Psoas muscle (tissue), 8 donors: ENCODE measurements at regions of chr1 and their contacts with region 1.

Region 1: DNA sequence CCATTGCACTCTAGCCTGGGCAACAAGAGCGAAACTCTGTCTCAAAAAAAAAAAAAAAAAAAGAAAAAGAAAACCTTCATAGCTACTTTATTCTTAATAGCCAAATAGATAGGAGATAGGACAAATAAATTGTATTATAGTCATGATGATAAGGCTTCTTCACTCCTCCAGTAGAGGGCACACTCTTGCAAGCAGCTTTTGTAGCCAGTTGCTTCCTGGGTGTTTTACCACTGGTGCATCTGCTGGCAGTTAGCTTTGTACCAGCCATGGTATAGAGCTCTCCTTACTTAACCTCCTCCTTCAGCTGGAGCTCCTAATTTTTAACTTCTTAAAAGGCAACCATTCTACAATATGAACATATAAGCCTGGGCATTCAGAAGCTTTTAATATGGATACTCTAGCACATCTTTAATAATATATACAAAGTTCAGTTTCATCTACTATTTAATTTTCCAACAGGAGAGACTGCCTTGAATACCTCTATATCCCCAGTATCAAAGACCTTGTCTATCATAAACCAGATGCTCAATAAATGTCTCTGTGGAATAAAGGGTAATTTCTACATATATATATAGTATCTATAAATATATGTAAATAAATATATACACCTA is 35.8 kb downstream of the EVI5 start:
- DNase-seq: no peak
- ATAC-seq: peak in 3 of 4 donors; percentile 52 to 83 (median 79)
- H3K4me3 ChIP-seq: no peak overlapping the region
- H3K27ac ChIP-seq: no peak overlapping the region
- H3K4me1 ChIP-seq: peaks cover 10% of the 10 kb centered on the region
- H3K27me3 ChIP-seq: no peaks in the 10 kb centered on the region
- CTCF ChIP-seq: peak; percentile 50

Region 2: DNA sequence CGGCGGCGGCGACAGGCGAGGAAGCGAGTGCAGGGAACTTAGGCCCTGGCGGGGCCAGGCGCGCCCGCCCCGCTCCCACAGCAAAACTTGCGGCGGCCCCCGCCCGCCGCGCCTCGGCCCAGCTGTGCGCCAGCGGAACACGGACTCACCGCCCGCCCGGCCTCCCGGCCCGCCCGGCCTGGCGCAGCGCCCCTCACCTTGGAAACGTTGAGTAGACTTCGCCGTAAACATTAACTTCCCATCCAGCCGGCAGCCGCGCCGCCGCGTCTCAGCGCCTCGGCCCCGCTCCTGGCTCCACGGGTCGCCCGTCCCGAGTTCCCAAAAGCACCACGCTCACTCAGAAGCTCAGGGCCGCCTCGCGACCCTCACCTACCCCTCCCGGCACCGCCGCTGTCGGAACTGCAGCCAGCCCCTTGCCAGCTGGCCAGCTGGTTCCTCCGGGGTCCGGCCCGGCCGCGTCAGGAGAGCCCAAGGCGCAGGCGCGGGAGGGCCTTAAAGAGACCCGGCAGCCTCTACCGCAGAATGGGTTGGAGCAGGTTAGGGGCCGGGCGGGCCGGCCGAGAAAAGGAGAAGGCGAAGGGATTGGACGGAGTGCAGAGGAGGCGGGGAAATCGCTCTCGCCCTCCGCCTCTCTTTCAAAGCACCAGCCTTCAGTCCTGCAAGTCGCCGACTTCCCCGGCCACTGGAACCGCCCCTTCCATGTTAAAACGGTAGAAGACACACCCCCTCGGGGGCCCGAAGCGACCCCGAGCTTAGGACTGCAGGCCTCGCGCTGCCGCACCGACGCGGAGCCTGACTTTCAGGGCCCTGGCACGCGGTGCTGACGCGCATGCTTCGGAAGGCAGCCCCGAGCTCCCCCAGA is 35.7 kb after region 1 on chr1 and contains the start of gene EVI5:
- intact Hi-C with region 1: loop called in 1 of 2 experiments (anchors 5 kb)
- DNase-seq: peak; percentile 96 to 97
- ATAC-seq: peak; percentile 94 to 97 (median 95)
- H3K4me3 ChIP-seq: peak within 1 kb of the TSS; percentile 88
- H3K27ac ChIP-seq: peak within 1 kb of the TSS; percentile 97
- H3K4me1 ChIP-seq: peaks cover 11% of the 10 kb centered on the region
- H3K27me3 ChIP-seq: no peaks in the 10 kb centered on the region
- CTCF ChIP-seq: no peak
- total RNA-seq, gene EVI5: 6.3 to 15.9 (median 12.5) TPM

Region 3: GRCh38 chr1:92817986-92818764 is 69.0 kb after region 1 on chr1:
- intact Hi-C with region 1: loop called (anchors 5 kb)
- DNase-seq: no peak
- ATAC-seq: peak in 2 of 4 donors; percentile 46 to 67
- H3K4me3 ChIP-seq: no peak overlapping the region
- H3K27ac ChIP-seq: no peak overlapping the region
- H3K4me1 ChIP-seq: no peaks in the 10 kb centered on the region
- H3K27me3 ChIP-seq: no peaks in the 10 kb centered on the region
- CTCF ChIP-seq: peak; percentile 61